ENCODE measurements at regions of chr3 and their contacts with region 1.

Region 1: GRCh38 chr3:169966428-169966950 is at the start of gene SEC62:
- DNase-seq: peak; percentile 95 to 96 (median 95)
- H3K4me3 ChIP-seq: peak within 1 kb of the TSS; percentile 83 to 97
- H3K4me3 Mint-ChIP-seq: peak within 1 kb of the TSS; percentile 90 to 100 (median 96)
- H3K27ac ChIP-seq: peak within 1 kb of the TSS; percentile 95
- H3K27ac Mint-ChIP-seq: peak within 1 kb of the TSS; percentile 98 to 100 (median 99)
- H3K4me1 ChIP-seq: peaks cover 54% of the 10 kb centered on the region
- H3K4me1 Mint-ChIP-seq: peaks cover 48 to 71% (median 60%) of the 10 kb centered on the region in 4 donors
- H3K27me3 ChIP-seq: no peaks in the 10 kb centered on the region
- H3K27me3 Mint-ChIP-seq: no peaks in the 10 kb centered on the region
- total RNA-seq, gene SEC62: 127 to 136 TPM

Region 2: GRCh38 chr3:169772897-169773828 is 193.3 kb before region 1 on chr3 and contains the start of gene MYNN:
- CTCF ChIA-PET with region 1: interaction called, 3 read pairs
- POLR2A ChIA-PET with region 1: interaction called, 60 read pairs
- intact Hi-C with region 1: loop called (anchors 1 kb)
- DNase-seq: peak; percentile 92 to 95 (median 94)
- H3K4me3 ChIP-seq: peak within 1 kb of the TSS; percentile 83 to 94
- H3K4me3 Mint-ChIP-seq: peak within 1 kb of the TSS; percentile 92 to 99 (median 98)
- H3K27ac ChIP-seq: peak within 1 kb of the TSS; percentile 99
- H3K27ac Mint-ChIP-seq: peak within 1 kb of the TSS; percentile 98 to 100 (median 99)
- H3K4me1 ChIP-seq: peaks cover 36% of the 10 kb centered on the region
- H3K4me1 Mint-ChIP-seq: peaks cover 27 to 70% (median 43%) of the 10 kb centered on the region in 4 donors
- H3K27me3 ChIP-seq: no peaks in the 10 kb centered on the region
- H3K27me3 Mint-ChIP-seq: peaks cover 0 to 11% of the 10 kb centered on the region in 2 donors
- total RNA-seq, gene MYNN: 21.1 to 23.0 TPM

Region 3: GRCh38 chr3:169863458-169863899 is 103.0 kb before region 1 on chr3:
- CTCF ChIA-PET with region 1: interaction called, 12 read pairs
- POLR2A ChIA-PET with region 1: interaction called, 6 read pairs
- intact Hi-C with region 1: loop called (anchors 1 kb)
- DNase-seq: peak; percentile 54 to 71 (median 66)
- H3K4me3 ChIP-seq: no peak overlapping the region
- H3K4me3 Mint-ChIP-seq: no peak overlapping the region
- H3K27ac ChIP-seq: no peak overlapping the region
- H3K27ac Mint-ChIP-seq: peak overlapping the region in 2 of 7 donors; percentile 23 to 38
- H3K4me1 ChIP-seq: peaks cover 7% of the 10 kb centered on the region
- H3K4me1 Mint-ChIP-seq: peaks cover 4 to 15% (median 4%) of the 10 kb centered on the region in 4 donors
- H3K27me3 ChIP-seq: no peaks in the 10 kb centered on the region
- H3K27me3 Mint-ChIP-seq: peaks cover 3 to 9% of the 10 kb centered on the region in 2 donors

Region 4: DNA sequence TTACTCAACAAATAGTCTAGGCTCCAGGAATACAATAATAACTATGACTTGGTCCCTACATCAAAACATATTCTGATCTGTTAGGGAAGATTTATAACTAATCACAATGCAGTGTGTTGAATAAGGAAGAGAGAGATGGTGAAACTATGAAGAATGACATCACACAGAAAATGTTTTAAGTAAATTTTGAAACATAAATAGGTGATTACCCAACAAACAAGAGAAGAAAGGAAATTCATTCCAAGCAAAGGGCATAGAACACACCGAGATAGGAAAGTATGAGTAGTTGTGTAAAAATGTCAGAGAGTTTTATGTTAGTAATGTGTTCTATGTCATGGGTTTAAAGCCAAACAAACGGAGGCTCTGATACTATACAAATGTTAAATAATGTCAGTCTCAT is 13.6 kb after region 1 on chr3:
- CTCF ChIA-PET with region 1: interaction called, 4 read pairs
- POLR2A ChIA-PET with region 1: interaction called, 30 read pairs
- intact Hi-C with region 1: no loop called
- DNase-seq: no peak
- H3K4me3 ChIP-seq: no peak overlapping the region
- H3K4me3 Mint-ChIP-seq: no peak overlapping the region
- H3K27ac ChIP-seq: no peak overlapping the region
- H3K27ac Mint-ChIP-seq: peak overlapping the region in 2 of 7 donors; percentile 10 to 75
- H3K4me1 ChIP-seq: no peaks in the 10 kb centered on the region
- H3K4me1 Mint-ChIP-seq: peaks cover 0 to 5% (median 5%) of the 10 kb centered on the region in 4 donors
- H3K27me3 ChIP-seq: no peaks in the 10 kb centered on the region
- H3K27me3 Mint-ChIP-seq: no peaks in the 10 kb centered on the region

Region 5: GRCh38 chr3:170180908-170181879 is 214.7 kb after region 1 on chr3 and contains the start of gene PHC3:
- CTCF ChIA-PET with region 1: no interaction called
- POLR2A ChIA-PET with region 1: interaction called, 23 read pairs
- intact Hi-C with region 1: loop called (anchors 2 kb)
- DNase-seq: peak; percentile 91 to 92 (median 91)
- H3K4me3 ChIP-seq: peak within 1 kb of the TSS; percentile 48 to 97
- H3K4me3 Mint-ChIP-seq: peak within 1 kb of the TSS; percentile 96 to 100 (median 99)
- H3K27ac ChIP-seq: peak within 1 kb of the TSS; percentile 98
- H3K27ac Mint-ChIP-seq: peak within 1 kb of the TSS; percentile 99 to 100 (median 100)
- H3K4me1 ChIP-seq: peaks cover 40% of the 10 kb centered on the region
- H3K4me1 Mint-ChIP-seq: peaks cover 23 to 41% (median 32%) of the 10 kb centered on the region in 4 donors
- H3K27me3 ChIP-seq: no peaks in the 10 kb centered on the region
- H3K27me3 Mint-ChIP-seq: no peaks in the 10 kb centered on the region
- total RNA-seq, gene PHC3: 168 to 173 TPM

Region 6: GRCh38 chr3:170357176-170357919 is 390.9 kb after region 1 on chr3 and contains the start of gene SKIL:
- CTCF ChIA-PET with region 1: no interaction called
- POLR2A ChIA-PET with region 1: interaction called, 27 read pairs
- intact Hi-C with region 1: loop called (anchors 1 kb)
- DNase-seq: peak; percentile 96 to 98 (median 97)
- H3K4me3 ChIP-seq: peak within 1 kb of the TSS; percentile 57 to 62
- H3K4me3 Mint-ChIP-seq: peak within 1 kb of the TSS; percentile 90 to 99 (median 93)
- H3K27ac ChIP-seq: peak within 1 kb of the TSS; percentile 88
- H3K27ac Mint-ChIP-seq: peak within 1 kb of the TSS; percentile 95 to 99 (median 98)
- H3K4me1 ChIP-seq: peaks cover 32% of the 10 kb centered on the region
- H3K4me1 Mint-ChIP-seq: peaks cover 31 to 72% (median 43%) of the 10 kb centered on the region in 4 donors
- H3K27me3 ChIP-seq: no peaks in the 10 kb centered on the region
- H3K27me3 Mint-ChIP-seq: no peaks in the 10 kb centered on the region
- total RNA-seq, gene SKIL: 59.3 to 60.4 TPM

Region 7: GRCh38 chr3:170908235-170909116 is 942.0 kb after region 1 on chr3 and contains the start of gene EIF5A2:
- CTCF ChIA-PET with region 1: no interaction called
- POLR2A ChIA-PET with region 1: interaction called, 3 read pairs
- intact Hi-C with region 1: loop called (anchors 2 kb)
- DNase-seq: peak; percentile 92 to 97 (median 95)
- H3K4me3 ChIP-seq: peak within 1 kb of the TSS; percentile 59 to 69
- H3K4me3 Mint-ChIP-seq: peak within 1 kb of the TSS; percentile 94 to 98 (median 97)
- H3K27ac ChIP-seq: peak within 1 kb of the TSS; percentile 59
- H3K27ac Mint-ChIP-seq: peak within 1 kb of the TSS; percentile 86 to 98 (median 97)
- H3K4me1 ChIP-seq: peaks cover 22% of the 10 kb centered on the region
- H3K4me1 Mint-ChIP-seq: peaks cover 11 to 28% (median 19%) of the 10 kb centered on the region in 4 donors
- H3K27me3 ChIP-seq: no peaks in the 10 kb centered on the region
- H3K27me3 Mint-ChIP-seq: no peaks in the 10 kb centered on the region
- total RNA-seq, gene EIF5A2: 11.4 to 12.2 TPM